ENCODE measurements at regions of chr7 and their contacts with region 1.

Region 1: DNA sequence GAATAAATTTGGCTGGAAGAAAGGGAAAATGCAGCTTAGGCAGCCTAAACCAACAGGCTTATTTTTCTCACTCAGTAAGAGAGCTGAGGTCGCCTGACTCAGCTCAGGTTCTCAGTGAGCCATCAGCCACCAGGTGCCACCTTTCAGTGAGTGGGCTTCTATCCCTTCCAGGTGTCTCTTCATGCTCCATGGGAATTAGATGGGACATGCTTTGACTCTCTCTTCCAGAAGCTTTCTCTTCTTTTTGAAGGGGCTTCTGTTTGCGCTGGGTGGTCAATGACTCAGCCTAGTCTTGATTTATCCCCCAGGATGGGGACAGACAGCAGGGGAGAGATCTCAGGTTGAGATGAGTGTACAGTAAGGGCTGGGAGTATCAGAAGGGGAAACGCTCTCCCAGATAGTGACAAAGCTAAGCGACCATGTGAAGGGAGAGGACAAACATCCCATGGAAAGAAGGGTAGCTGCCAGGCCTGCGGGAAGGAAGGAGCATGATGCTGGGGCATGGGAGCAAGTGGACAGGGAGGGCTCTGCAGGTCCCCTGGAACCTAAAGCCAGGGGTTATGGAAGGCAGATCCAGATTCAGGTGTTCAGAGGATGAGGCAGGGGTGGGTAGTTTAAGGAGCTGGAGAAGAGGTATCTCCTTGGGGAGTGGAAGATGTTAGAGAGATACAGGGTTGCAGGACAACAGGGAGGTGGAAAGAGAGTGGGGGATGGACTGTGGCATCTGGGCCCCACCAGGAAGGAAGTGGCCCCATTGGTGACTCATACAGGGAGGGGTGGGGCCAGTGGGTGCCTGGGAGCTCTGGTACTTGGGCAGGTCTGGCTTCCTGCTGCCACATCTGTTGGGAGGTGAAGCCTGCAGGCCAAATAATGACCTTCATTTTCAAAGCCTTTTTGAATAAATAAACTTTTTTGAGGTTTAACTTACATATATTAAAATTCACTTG is 32.5 kb downstream of the OGDH start:
- DNase-seq: peak; percentile 90
- H3K4me3 Mint-ChIP-seq: peak overlapping the region; percentile 59
- H3K27ac Mint-ChIP-seq: peak overlapping the region; percentile 98
- H3K4me1 Mint-ChIP-seq: peaks cover 48% of the 10 kb centered on the region
- H3K27me3 Mint-ChIP-seq: no peaks in the 10 kb centered on the region
- CTCF ChIP-seq: no peak

Region 2: DNA sequence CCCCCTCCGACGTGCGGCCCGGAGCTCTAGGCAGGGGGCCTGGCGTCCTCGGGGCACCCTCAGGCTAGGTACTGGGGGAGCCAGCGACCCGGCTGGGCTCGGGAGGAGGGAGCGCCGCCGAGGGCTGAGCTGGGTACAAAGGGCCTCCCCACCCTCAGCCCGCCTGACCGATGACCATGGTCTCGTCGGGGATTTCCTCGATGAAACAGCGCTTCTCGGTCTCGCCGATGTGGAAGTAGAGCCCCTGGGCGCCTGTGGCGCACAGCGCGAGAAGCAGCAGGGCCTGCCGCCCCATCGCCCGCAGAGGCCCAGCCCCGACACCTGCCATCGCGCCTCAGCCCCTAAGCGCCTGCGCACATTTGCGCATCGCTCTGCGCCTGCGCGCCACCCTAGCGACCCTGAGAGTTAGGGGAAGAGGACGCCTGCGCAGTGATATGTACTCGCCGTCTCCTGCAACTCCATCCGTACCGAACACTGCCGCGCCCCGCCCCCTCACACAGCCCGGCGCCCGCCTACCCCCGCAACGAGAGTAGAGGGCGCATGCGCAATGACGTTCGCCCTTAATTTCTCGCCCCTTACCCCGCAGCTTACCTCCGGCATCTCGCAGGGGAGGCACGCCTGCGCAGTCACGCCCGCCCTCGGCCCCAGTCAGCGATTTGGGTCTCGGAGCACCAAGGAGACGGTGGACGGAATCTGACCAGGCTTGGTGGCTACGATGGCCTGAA is 56.8 kb before region 1 on chr7 and contains the start of gene TMED4:
- CTCF ChIA-PET with region 1: no interaction called
- POLR2A ChIA-PET with region 1: interaction called, 24 read pairs
- intact Hi-C with region 1: no loop called
- DNase-seq: peak; percentile 99
- H3K4me3 Mint-ChIP-seq: peak within 1 kb of the TSS; percentile 85
- H3K27ac Mint-ChIP-seq: peak within 1 kb of the TSS; percentile 93
- H3K4me1 Mint-ChIP-seq: peaks cover 6% of the 10 kb centered on the region
- H3K27me3 Mint-ChIP-seq: no peaks in the 10 kb centered on the region
- CTCF ChIP-seq: no peak
- total RNA-seq, gene TMED4: 49.7 and 58.0 TPM in 2 replicates

Region 3: GRCh38 chr7:44622307-44623151 is 16.4 kb before region 1 on chr7:
- CTCF ChIA-PET with region 1: interaction called, 3 read pairs
- POLR2A ChIA-PET with region 1: interaction called, 19 read pairs
- intact Hi-C with region 1: no loop called
- DNase-seq: no peak
- H3K4me3 Mint-ChIP-seq: no peak overlapping the region
- H3K27ac Mint-ChIP-seq: no peak overlapping the region
- H3K4me1 Mint-ChIP-seq: peaks cover 26% of the 10 kb centered on the region
- H3K27me3 Mint-ChIP-seq: no peaks in the 10 kb centered on the region
- CTCF ChIP-seq: no peak

Region 4: GRCh38 chr7:44665531-44666213 is 26.8 kb after region 1 on chr7:
- CTCF ChIA-PET with region 1: no interaction called
- POLR2A ChIA-PET with region 1: interaction called, 13 read pairs
- intact Hi-C with region 1: no loop called
- DNase-seq: peak; percentile 16
- H3K4me3 Mint-ChIP-seq: no peak overlapping the region
- H3K27ac Mint-ChIP-seq: peak overlapping the region; percentile 69
- H3K4me1 Mint-ChIP-seq: peaks cover 14% of the 10 kb centered on the region
- H3K27me3 Mint-ChIP-seq: no peaks in the 10 kb centered on the region
- CTCF ChIP-seq: no peak

Region 5: GRCh38 chr7:44678471-44679179 is 39.7 kb after region 1 on chr7:
- CTCF ChIA-PET with region 1: no interaction called
- POLR2A ChIA-PET with region 1: interaction called, 11 read pairs
- intact Hi-C with region 1: no loop called
- DNase-seq: peak; percentile 93
- H3K4me3 Mint-ChIP-seq: peak overlapping the region; percentile 21
- H3K27ac Mint-ChIP-seq: no peak overlapping the region
- H3K4me1 Mint-ChIP-seq: peaks cover 40% of the 10 kb centered on the region
- H3K27me3 Mint-ChIP-seq: no peaks in the 10 kb centered on the region
- CTCF ChIP-seq: no peak

Region 6: GRCh38 chr7:44748045-44748947 is 109.4 kb after region 1 on chr7 and contains the start of gene ZMIZ2:
- CTCF ChIA-PET with region 1: no interaction called
- POLR2A ChIA-PET with region 1: interaction called, 35 read pairs
- intact Hi-C with region 1: no loop called
- DNase-seq: peak; percentile 84
- H3K4me3 Mint-ChIP-seq: peak within 1 kb of the TSS; percentile 74
- H3K27ac Mint-ChIP-seq: peak within 1 kb of the TSS; percentile 29
- H3K4me1 Mint-ChIP-seq: peaks cover 26% of the 10 kb centered on the region
- H3K27me3 Mint-ChIP-seq: no peaks in the 10 kb centered on the region
- CTCF ChIP-seq: no peak
- total RNA-seq, gene ZMIZ2: 94.4 and 100 TPM in 2 replicates